ENCODE measurements at regions of chr2 and their contacts with region 1.

Region 1: GRCh38 chr2:126657636-126658318 is 1.8 kb downstream of the GYPC start:
- DNase-seq: peak; percentile 94
- H3K4me3 ChIP-seq: peak overlapping the region; percentile 69 to 88 (median 86)
- H3K27ac ChIP-seq: peak overlapping the region; percentile 94 to 99 (median 99)
- H3K4me1 ChIP-seq: peaks cover 0 to 73% (median 67%) of the 10 kb centered on the region in 4 donors
- H3K27me3 ChIP-seq: no peaks in the 10 kb centered on the region
- CTCF ChIP-seq: no peak
- EP300 ChIP-seq: peak in 3 of 4 donors; percentile 44 to 69 (median 56)
- POLR2A ChIP-seq: peak in 1 of 2 donors; percentile 17

Region 2: GRCh38 chr2:126187668-126188067 is 470.1 kb before region 1 on chr2:
- intact Hi-C with region 1: no loop called
- DNase-seq: no peak
- H3K4me3 ChIP-seq: no peak overlapping the region
- H3K27ac ChIP-seq: no peak overlapping the region
- H3K4me1 ChIP-seq: peaks cover 0 to 22% (median 4%) of the 10 kb centered on the region in 4 donors
- H3K27me3 ChIP-seq: no peaks in the 10 kb centered on the region
- CTCF ChIP-seq: no peak
- EP300 ChIP-seq: no peak
- POLR2A ChIP-seq: no peak

Region 3: DNA sequence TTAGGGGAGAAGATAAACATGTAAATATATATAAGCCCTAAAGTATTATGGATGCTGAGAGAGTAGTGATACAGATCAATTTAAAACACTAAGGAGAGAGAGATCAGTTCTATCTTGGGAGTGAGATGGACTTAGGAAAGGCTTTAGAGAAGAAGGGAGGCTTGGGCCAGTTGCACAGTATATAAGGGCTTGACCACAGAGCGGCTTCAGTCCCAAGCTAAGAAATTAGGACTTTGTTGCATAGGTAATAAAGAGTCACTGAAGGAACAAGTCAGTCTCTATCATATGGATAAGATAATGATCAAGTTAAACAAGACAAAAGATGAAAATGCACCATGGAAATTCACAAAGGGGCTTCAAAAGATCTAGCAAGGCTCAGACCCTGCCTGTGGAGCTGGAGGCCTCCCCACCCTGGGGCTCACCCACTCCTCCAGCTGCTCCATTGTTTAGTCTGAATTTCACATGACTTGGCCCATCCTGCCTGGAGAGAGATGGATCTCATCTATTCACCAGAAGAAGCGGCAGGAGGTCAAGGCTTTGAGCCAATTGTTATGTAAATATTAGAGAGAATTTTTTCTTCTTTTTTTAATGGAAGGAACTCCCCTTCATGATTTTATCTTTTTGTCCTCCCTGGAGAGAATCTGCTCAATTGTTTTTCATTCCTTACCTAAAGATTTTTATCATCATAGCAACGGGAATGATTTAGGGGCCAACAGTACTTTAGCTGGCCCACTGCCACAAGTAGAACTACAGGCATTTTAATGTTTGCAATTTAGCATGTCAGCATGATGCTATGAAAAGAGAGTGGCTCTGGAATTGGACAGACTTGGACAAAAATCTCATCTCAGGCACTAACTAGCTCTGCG is 42.2 kb after region 1 on chr2:
- intact Hi-C with region 1: loop called (anchors 10 kb)
- DNase-seq: no peak
- H3K4me3 ChIP-seq: no peak overlapping the region
- H3K27ac ChIP-seq: peak overlapping the region in 2 of 4 donors; percentile 38 to 51
- H3K4me1 ChIP-seq: peaks cover 0 to 37% (median 22%) of the 10 kb centered on the region in 4 donors
- H3K27me3 ChIP-seq: no peaks in the 10 kb centered on the region
- CTCF ChIP-seq: no peak
- EP300 ChIP-seq: no peak
- POLR2A ChIP-seq: no peak

Region 4: GRCh38 chr2:127231130-127231865 is 573.5 kb after region 1 on chr2:
- intact Hi-C with region 1: no loop called
- DNase-seq: no peak
- H3K4me3 ChIP-seq: no peak overlapping the region
- H3K27ac ChIP-seq: no peak overlapping the region
- H3K4me1 ChIP-seq: peaks cover 0 to 12% (median 8%) of the 10 kb centered on the region in 4 donors
- H3K27me3 ChIP-seq: no peaks in the 10 kb centered on the region
- CTCF ChIP-seq: no peak
- EP300 ChIP-seq: no peak
- POLR2A ChIP-seq: no peak

Region 5: DNA sequence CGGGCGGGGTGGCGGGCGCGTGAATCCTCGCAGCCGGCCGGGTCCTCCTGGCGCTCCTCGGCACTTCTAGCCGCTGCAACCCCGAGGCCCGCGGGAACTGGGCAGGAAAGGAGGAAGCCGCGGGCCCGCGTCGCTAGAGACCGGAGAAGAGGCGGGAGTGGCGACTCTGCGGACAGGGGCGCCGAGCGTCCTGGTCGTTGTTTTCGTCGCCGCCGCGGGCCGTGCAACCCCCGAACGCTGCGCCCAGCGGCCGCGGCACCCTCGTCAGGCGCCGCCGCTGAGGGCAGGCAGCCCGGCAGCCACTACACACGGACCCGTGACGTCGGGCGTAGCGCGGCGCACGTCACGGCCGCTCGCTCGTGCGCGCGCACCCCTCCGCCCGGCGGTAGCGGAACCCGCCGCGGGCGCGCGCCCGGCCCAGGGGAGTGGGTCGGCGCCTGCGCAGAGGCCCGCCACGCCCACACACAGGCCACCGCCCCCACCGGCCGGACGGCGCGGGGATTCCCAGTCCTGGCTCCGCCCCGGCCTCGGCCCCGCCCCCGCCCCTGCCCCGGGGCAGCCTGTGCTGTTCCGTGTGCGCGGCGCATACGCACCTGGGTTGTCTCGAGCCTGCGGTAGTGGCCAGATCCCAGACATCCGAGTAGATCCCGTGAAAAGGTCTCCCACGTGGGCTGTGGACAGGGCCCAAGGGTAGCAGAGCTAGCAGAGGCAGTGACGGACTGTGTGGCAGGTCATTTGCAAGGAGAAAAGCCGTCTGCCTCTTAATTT is 730.1 kb after region 1 on chr2 and contains the start of gene MAP3K2:
- intact Hi-C with region 1: loop called (anchors 10 kb)
- DNase-seq: peak; percentile 97
- H3K4me3 ChIP-seq: peak within 1 kb of the TSS; percentile 81 to 98 (median 90)
- H3K27ac ChIP-seq: peak within 1 kb of the TSS; percentile 97 to 100 (median 99)
- H3K4me1 ChIP-seq: peaks cover 0 to 50% (median 30%) of the 10 kb centered on the region in 4 donors
- H3K27me3 ChIP-seq: no peaks in the 10 kb centered on the region
- CTCF ChIP-seq: no peak
- EP300 ChIP-seq: peak in 2 of 4 donors; percentile 55 to 95
- POLR2A ChIP-seq: peak; percentile 66 to 71
- total RNA-seq, gene MAP3K2: 39.9 to 52.2 (median 47.7) TPM